ENCODE measurements at regions of chr10 and their contacts with region 1.

Region 1: GRCh38 chr10:97210543-97210961 is 24.8 kb upstream of the SLIT1 start:
- DNase-seq: peak; percentile 77
- H3K4me3 Mint-ChIP-seq: no peak overlapping the region
- H3K27ac Mint-ChIP-seq: no peak overlapping the region
- H3K4me1 Mint-ChIP-seq: no peaks in the 10 kb centered on the region
- H3K27me3 Mint-ChIP-seq: peaks cover 12% of the 10 kb centered on the region

Region 2: GRCh38 chr10:97037365-97038361 is 172.9 kb before region 1 on chr10:
- CTCF ChIA-PET with region 1: interaction called, 33 read pairs
- DNase-seq: peak; percentile 80
- H3K4me3 Mint-ChIP-seq: peak overlapping the region; percentile 43
- H3K27ac Mint-ChIP-seq: no peak overlapping the region
- H3K4me1 Mint-ChIP-seq: peaks cover 11% of the 10 kb centered on the region
- H3K27me3 Mint-ChIP-seq: peaks cover 10% of the 10 kb centered on the region

Region 3: DNA sequence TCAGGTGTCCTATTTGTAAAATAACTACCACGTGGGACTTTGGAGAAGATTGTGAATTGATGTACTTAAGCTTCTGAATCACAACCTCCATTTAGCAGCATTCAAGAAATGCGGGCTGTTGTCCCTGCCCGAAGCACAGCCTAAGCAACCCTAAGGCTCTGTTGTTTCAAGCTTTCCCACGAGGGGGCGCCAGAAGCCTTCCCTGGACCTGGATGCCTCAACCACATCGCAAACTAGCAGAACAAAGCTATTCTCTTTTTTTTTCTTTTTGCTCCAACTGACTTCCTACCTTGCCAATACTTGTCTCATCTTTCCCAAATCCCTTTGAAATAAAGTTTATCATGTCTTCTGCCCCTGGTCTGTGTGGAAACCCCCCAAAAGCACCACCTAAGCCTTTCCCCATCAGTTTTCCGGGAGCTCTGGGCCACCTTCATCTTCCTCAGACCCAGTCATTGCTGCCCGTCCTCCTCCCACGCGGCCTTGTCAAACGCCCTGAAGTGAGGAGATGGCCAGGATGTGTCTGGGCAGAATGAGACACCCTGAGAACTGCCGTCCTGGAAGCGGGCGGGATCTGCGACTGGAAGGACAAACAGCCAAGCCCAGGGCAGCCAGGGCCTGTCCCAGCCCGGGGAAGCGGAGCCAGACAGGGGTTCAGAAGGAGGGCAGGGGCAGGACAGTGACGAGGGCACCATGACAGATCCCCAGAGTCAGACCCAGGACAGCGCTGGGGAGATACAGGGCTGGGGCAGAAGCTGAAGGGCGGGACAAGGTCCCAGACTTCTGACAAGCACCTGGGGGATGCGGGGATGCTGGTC is 137.5 kb before region 1 on chr10:
- CTCF ChIA-PET with region 1: interaction called, 239 read pairs
- DNase-seq: peak; percentile 87
- H3K4me3 Mint-ChIP-seq: no peak overlapping the region
- H3K27ac Mint-ChIP-seq: no peak overlapping the region
- H3K4me1 Mint-ChIP-seq: peaks cover 11% of the 10 kb centered on the region
- H3K27me3 Mint-ChIP-seq: peaks cover 61% of the 10 kb centered on the region

Region 4: GRCh38 chr10:97190450-97190849 is 20.1 kb before region 1 on chr10:
- CTCF ChIA-PET with region 1: interaction called, 99 read pairs
- DNase-seq: no peak
- H3K4me3 Mint-ChIP-seq: no peak overlapping the region
- H3K27ac Mint-ChIP-seq: no peak overlapping the region
- H3K4me1 Mint-ChIP-seq: peaks cover 2% of the 10 kb centered on the region
- H3K27me3 Mint-ChIP-seq: peaks cover 44% of the 10 kb centered on the region

Region 5: GRCh38 chr10:97196223-97197029 is 14.1 kb before region 1 on chr10:
- CTCF ChIA-PET with region 1: interaction called, 99 read pairs
- DNase-seq: peak; percentile 79
- H3K4me3 Mint-ChIP-seq: peak overlapping the region; percentile 72
- H3K27ac Mint-ChIP-seq: no peak overlapping the region
- H3K4me1 Mint-ChIP-seq: peaks cover 22% of the 10 kb centered on the region
- H3K27me3 Mint-ChIP-seq: peaks cover 62% of the 10 kb centered on the region

Region 6: GRCh38 chr10:97224483-97225435 is 14.2 kb after region 1 on chr10:
- CTCF ChIA-PET with region 1: interaction called, 15 read pairs
- DNase-seq: no peak
- H3K4me3 Mint-ChIP-seq: no peak overlapping the region
- H3K27ac Mint-ChIP-seq: no peak overlapping the region
- H3K4me1 Mint-ChIP-seq: peaks cover 6% of the 10 kb centered on the region
- H3K27me3 Mint-ChIP-seq: no peaks in the 10 kb centered on the region

Region 7: DNA sequence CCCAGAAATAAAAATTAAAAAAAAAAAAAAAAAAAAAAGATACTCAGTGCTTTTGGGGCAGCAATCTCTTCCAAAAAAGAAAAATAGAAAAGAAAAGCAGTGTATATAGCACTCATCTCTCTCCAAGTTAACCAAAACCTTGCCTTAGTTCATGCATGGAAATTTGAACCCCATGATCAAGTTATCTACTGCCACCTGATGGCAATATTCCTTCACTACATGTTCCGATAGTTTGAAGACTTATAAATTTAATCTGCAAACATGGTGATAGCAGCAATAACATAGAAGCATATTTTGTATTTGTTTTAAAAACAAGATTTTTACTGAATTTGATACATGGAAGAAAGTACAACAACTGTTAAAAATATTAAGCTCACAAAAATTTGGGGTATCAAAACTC is 23.8 kb after region 1 on chr10:
- CTCF ChIA-PET with region 1: interaction called, 15 read pairs
- DNase-seq: no peak
- H3K4me3 Mint-ChIP-seq: no peak overlapping the region
- H3K27ac Mint-ChIP-seq: no peak overlapping the region
- H3K4me1 Mint-ChIP-seq: peaks cover 8% of the 10 kb centered on the region
- H3K27me3 Mint-ChIP-seq: no peaks in the 10 kb centered on the region

Measured in activated naive CD4-positive, alpha-beta T cell treated with anti-CD3 and anti-CD28 coated beads, Interleukin-2, amount 10 ng/mL, durations not matched to agents 7 days and 5 days (primary cell).